ENCODE measurements at regions of chr4 and their contacts with region 1.

Region 1: GRCh38 chr4:77031544-77031943 is 44.2 kb downstream of the CCNI start:
- DNase-seq: peak; percentile 35
- H3K4me3 Mint-ChIP-seq: no peak overlapping the region
- H3K27ac Mint-ChIP-seq: no peak overlapping the region
- H3K4me1 Mint-ChIP-seq: peaks cover 46% of the 10 kb centered on the region
- H3K27me3 Mint-ChIP-seq: peaks cover 9% of the 10 kb centered on the region

Region 2: GRCh38 chr4:76896731-76897535 is 134.6 kb before region 1 on chr4:
- CTCF ChIA-PET with region 1: no interaction called
- POLR2A ChIA-PET with region 1: no interaction called
- intact Hi-C with region 1: loop called (anchors 5 kb)
- DNase-seq: peak; percentile 29
- H3K4me3 Mint-ChIP-seq: no peak overlapping the region
- H3K27ac Mint-ChIP-seq: no peak overlapping the region
- H3K4me1 Mint-ChIP-seq: no peaks in the 10 kb centered on the region
- H3K27me3 Mint-ChIP-seq: peaks cover 28% of the 10 kb centered on the region

Region 3: DNA sequence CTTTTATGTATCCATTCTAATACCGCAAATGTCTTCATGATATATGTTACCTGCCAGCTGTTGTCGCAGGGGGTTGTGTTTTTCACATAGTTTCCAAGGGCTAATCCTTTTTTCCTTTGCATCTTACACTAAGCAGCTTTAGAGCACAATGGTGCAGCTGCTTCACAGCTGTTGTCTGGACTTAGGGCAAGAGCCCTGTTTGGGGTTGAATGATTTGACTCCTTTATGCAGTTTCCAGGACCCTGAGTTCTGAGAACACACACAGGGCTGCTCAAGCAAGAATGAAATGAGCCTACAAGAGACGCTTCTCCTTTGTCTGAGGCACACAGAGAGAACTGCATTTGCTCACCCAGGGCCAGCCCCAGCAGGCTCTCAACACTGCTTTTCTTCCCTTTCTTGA is 145.7 kb after region 1 on chr4:
- CTCF ChIA-PET with region 1: no interaction called
- POLR2A ChIA-PET with region 1: no interaction called
- intact Hi-C with region 1: no loop called
- DNase-seq: no peak
- H3K4me3 Mint-ChIP-seq: no peak overlapping the region
- H3K27ac Mint-ChIP-seq: no peak overlapping the region
- H3K4me1 Mint-ChIP-seq: no peaks in the 10 kb centered on the region
- H3K27me3 Mint-ChIP-seq: peaks cover 2% of the 10 kb centered on the region